GM12878 (cell line): ENCODE measurements at regions of chr12 and their contacts with region 1.

Region 1: GRCh38 chr12:27123642-27124041 is 41.3 kb upstream of the C12orf71 start:
- DNase-seq: no peak
- ATAC-seq: peak; percentile 57
- H3K4me3 ChIP-seq: no peak overlapping the region
- H3K27ac ChIP-seq: no peak overlapping the region
- H3K4me1 ChIP-seq: no peaks in the 10 kb centered on the region
- H3K27me3 ChIP-seq: no peaks in the 10 kb centered on the region
- CTCF ChIP-seq: peak; percentile 11 to 32 (median 24); a peak in 1 of 6 replicates
- EP300 ChIP-seq: no peak
- POLR2A ChIP-seq: no peak
- RAD21 ChIP-seq: peak; percentile 60

Region 2: GRCh38 chr12:27034607-27035293 is 88.9 kb before region 1 on chr12:
- CTCF ChIA-PET with region 1: interaction called, 10 read pairs
- POLR2A ChIA-PET with region 1: no interaction called
- RAD21 ChIA-PET with region 1: interaction called, 3 read pairs
- SMC1A ChIA-PET with region 1: interaction called, 4 read pairs
- in situ Hi-C with region 1: no loop called
- intact Hi-C with region 1: no loop called
- DNase-seq: no peak
- ATAC-seq: no peak
- H3K4me3 ChIP-seq: no peak overlapping the region
- H3K27ac ChIP-seq: no peak overlapping the region
- H3K4me1 ChIP-seq: no peaks in the 10 kb centered on the region
- H3K27me3 ChIP-seq: no peaks in the 10 kb centered on the region
- CTCF ChIP-seq: no peak
- EP300 ChIP-seq: no peak
- POLR2A ChIP-seq: no peak
- RAD21 ChIP-seq: no peak

Region 3: DNA sequence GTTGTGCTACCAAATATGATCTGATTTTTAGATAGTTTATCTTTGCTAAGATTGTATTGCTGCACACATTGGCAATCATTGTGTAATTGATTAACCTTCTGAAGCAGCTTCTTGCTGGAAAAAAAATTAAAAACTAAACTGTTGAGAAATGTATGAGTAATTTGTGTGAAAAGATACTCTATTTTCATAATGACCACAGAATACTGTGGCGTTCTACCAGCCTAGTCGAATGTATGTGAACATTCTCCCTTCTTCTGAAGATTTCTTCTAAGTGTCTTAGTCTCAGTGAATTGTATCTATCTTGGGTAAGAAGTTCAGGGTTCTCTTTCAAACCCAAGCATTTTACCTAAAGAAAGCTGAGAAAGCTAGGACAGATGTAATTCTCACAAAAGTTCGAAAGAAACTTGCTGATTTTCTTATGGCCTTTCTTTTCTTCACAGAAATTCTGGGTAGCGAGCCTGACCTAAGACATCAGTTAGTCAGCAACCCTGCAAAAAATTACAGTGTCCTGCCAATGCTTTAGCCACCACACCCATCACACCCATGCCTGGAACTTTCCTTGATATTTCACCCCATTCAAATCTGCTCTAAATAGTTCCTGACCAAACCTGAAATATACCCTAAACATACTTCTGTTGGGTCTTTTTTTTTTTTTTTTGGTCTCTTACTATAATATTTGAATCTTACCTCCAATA is 14.2 kb before region 1 on chr12:
- CTCF ChIA-PET with region 1: interaction called, 3 read pairs
- POLR2A ChIA-PET with region 1: no interaction called
- RAD21 ChIA-PET with region 1: no interaction called
- SMC1A ChIA-PET with region 1: interaction called, 12 read pairs
- in situ Hi-C with region 1: no loop called
- intact Hi-C with region 1: no loop called
- DNase-seq: no peak
- ATAC-seq: peak; percentile 34
- H3K4me3 ChIP-seq: no peak overlapping the region
- H3K27ac ChIP-seq: no peak overlapping the region
- H3K4me1 ChIP-seq: no peaks in the 10 kb centered on the region
- H3K27me3 ChIP-seq: no peaks in the 10 kb centered on the region
- CTCF ChIP-seq: no peak
- EP300 ChIP-seq: no peak
- POLR2A ChIP-seq: no peak
- RAD21 ChIP-seq: no peak